Caco-2 (cell line): ENCODE measurements at regions of chr11 and their contacts with region 1.

Region 1: GRCh38 chr11:129117595-129118350 is 74.4 kb downstream of the ARHGAP32 start:
- DNase-seq: peak; percentile 70 to 83
- H3K4me3 ChIP-seq: no peak overlapping the region
- H3K4me3 Mint-ChIP-seq: no peak overlapping the region
- H3K27ac Mint-ChIP-seq: no peak overlapping the region
- H3K4me1 ChIP-seq: peaks cover 33% of the 10 kb centered on the region
- H3K4me1 Mint-ChIP-seq: peaks cover 22% of the 10 kb centered on the region
- H3K27me3 ChIP-seq: no peaks in the 10 kb centered on the region
- H3K27me3 Mint-ChIP-seq: no peaks in the 10 kb centered on the region
- CTCF ChIP-seq: peak; percentile 97 to 98

Region 2: DNA sequence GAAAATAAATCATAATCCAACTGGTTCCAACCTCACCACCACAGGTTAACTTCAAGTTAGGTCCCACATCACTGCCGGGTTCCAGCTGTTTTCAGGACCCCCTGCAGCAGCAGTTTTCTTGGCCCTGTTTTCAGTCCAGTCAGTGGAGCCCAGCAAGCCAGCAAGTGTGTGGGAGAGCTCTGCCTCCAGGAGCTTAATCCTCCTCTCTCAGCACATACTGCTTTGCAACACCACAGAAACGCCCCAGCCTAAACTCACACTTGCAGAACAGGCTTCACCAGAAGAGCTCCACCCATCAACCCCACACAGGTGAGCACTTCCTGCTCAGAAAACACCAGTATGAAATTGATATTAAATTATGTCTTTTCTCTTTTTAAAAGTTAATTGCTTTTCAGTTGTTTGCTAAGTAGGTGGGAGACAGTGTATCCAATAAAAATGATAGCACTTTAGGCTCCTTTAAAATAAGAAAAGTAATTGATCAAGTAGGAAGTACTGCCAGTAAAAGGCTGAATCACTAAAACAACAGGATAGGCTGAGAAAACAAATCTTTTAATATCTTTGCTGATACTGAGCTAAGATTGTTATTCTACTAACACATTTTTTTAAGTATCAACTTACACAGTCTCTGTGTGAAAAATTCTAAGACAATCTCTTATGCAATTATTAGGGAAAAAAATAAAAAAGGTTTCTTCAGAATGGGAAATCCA is 93.7 kb before region 1 on chr11:
- CTCF ChIA-PET with region 1: no interaction called
- POLR2A ChIA-PET with region 1: no interaction called
- intact Hi-C with region 1: loop called (anchors 1 kb)
- DNase-seq: peak; percentile 85 to 89
- H3K4me3 ChIP-seq: no peak overlapping the region
- H3K4me3 Mint-ChIP-seq: peak overlapping the region; percentile 55
- H3K27ac Mint-ChIP-seq: peak overlapping the region; percentile 65
- H3K4me1 ChIP-seq: peaks cover 14% of the 10 kb centered on the region
- H3K4me1 Mint-ChIP-seq: peaks cover 11% of the 10 kb centered on the region
- H3K27me3 ChIP-seq: no peaks in the 10 kb centered on the region
- H3K27me3 Mint-ChIP-seq: no peaks in the 10 kb centered on the region
- CTCF ChIP-seq: no peak

Region 3: DNA sequence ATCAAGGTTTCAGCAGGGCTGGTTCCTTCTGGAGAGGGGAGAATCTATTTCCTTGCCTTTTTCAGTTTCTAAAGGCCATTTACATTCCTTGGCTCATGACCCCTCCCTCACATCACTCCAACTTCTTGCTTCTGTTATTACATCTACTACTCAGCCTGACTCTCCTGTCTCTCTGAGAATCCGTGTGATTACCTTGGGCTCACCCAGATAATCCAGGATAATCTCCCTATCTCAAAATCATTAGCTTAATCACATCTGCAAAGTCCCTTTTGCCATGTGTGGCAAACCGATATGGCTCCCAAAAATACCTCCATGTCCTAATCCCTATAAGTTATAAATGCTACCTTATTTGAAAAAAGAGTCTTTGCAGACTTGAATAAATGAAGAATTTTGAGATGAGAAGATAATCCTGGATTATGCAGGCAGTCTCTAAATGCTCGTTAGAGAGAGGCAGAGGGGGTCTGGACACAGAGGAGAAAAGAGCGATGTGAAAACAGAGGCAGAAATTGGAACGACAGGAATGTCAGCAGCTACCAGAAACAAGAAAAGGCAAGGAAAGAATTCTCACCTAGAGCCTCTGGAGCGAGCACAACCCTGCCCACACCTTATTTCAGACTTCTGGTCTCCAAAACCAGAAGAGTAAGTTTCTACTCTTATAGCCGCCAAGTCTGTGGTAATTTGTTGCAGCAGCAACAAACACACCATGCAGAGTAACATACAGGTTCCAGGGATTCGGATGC is 97.9 kb after region 1 on chr11:
- CTCF ChIA-PET with region 1: no interaction called
- POLR2A ChIA-PET with region 1: no interaction called
- intact Hi-C with region 1: loop called (anchors 5 kb)
- DNase-seq: peak in 1 of 2 experiments; percentile 55
- H3K4me3 ChIP-seq: no peak overlapping the region
- H3K4me3 Mint-ChIP-seq: peak overlapping the region; percentile 15
- H3K27ac Mint-ChIP-seq: peak overlapping the region; percentile 43
- H3K4me1 ChIP-seq: peaks cover 13% of the 10 kb centered on the region
- H3K4me1 Mint-ChIP-seq: peaks cover 29% of the 10 kb centered on the region
- H3K27me3 ChIP-seq: no peaks in the 10 kb centered on the region
- H3K27me3 Mint-ChIP-seq: no peaks in the 10 kb centered on the region
- CTCF ChIP-seq: no peak

Region 4: DNA sequence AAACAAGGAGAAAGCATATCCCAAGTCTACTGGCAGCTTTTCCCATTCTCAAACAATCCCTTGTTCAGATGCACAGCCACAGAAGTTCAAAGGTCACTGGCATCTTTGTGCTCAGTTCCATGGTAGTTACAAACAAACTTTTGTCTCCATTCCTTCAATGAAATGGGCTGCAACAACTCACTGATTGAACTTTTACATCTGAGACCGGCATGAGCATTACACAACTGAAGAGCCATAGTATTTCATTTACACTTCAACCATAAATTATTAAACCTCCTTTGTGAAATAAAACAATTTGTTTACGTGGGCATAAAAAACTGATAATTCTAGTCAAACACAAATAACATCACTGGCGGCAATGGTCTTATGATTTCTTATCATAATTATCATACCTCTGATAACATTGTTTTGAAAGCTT is 142.2 kb after region 1 on chr11:
- CTCF ChIA-PET with region 1: no interaction called
- POLR2A ChIA-PET with region 1: no interaction called
- intact Hi-C with region 1: loop called (anchors 1 kb)
- DNase-seq: peak; percentile 53 to 58
- H3K4me3 ChIP-seq: no peak overlapping the region
- H3K4me3 Mint-ChIP-seq: peak overlapping the region; percentile 54
- H3K27ac Mint-ChIP-seq: peak overlapping the region; percentile 61
- H3K4me1 ChIP-seq: peaks cover 36% of the 10 kb centered on the region
- H3K4me1 Mint-ChIP-seq: peaks cover 60% of the 10 kb centered on the region
- H3K27me3 ChIP-seq: no peaks in the 10 kb centered on the region
- H3K27me3 Mint-ChIP-seq: no peaks in the 10 kb centered on the region
- CTCF ChIP-seq: no peak

Region 5: GRCh38 chr11:129315781-129316481 is 198.2 kb after region 1 on chr11:
- CTCF ChIA-PET with region 1: interaction called, 4 read pairs
- POLR2A ChIA-PET with region 1: interaction called, 3 read pairs
- intact Hi-C with region 1: loop called (anchors 1 kb)
- DNase-seq: peak; percentile 99 to 100
- H3K4me3 ChIP-seq: no peak overlapping the region
- H3K4me3 Mint-ChIP-seq: peak overlapping the region; percentile 66
- H3K27ac Mint-ChIP-seq: peak overlapping the region; percentile 94
- H3K4me1 ChIP-seq: peaks cover 69% of the 10 kb centered on the region
- H3K4me1 Mint-ChIP-seq: peaks cover 80% of the 10 kb centered on the region
- H3K27me3 ChIP-seq: no peaks in the 10 kb centered on the region
- H3K27me3 Mint-ChIP-seq: no peaks in the 10 kb centered on the region
- CTCF ChIP-seq: peak in 1 of 2 experiments; percentile 83

Region 6: DNA sequence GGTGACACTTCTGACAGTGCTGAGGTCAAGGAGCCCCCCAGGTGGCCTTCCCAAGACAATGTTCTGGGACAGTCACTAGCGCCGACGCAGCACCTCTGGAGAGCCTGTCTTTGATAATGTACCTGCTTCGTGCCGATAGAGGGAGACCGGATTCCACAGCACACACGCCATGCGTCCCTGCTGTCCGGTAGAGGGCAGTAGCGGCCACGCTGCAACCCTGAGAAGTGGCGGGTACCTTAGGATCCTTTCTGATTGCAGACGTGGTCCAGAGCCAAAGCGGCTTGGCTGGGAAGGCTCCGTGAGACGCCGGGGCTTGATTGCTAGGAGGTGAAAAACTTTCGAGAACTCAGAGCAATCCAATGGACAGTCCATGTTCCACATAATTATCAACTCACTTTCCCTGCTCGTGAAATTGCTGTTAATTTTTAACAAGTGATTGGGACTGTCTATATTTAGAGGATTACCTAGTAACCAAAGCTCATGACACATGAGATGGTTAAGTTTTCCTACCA is 246.4 kb after region 1 on chr11:
- CTCF ChIA-PET with region 1: interaction called, 5 read pairs
- POLR2A ChIA-PET with region 1: no interaction called
- intact Hi-C with region 1: loop called (anchors 1 kb)
- DNase-seq: peak; percentile 95 to 96
- H3K4me3 ChIP-seq: 0 out of 2 replicates have a peak overlapping the region, but pooled peaks have one; percentile 19
- H3K4me3 Mint-ChIP-seq: no peak overlapping the region
- H3K27ac Mint-ChIP-seq: no peak overlapping the region
- H3K4me1 ChIP-seq: peaks cover 10% of the 10 kb centered on the region; the same call in 1 of the 2 replicates
- H3K4me1 Mint-ChIP-seq: no peaks in the 10 kb centered on the region
- H3K27me3 ChIP-seq: no peaks in the 10 kb centered on the region
- H3K27me3 Mint-ChIP-seq: peaks cover 28% of the 10 kb centered on the region
- CTCF ChIP-seq: peak; percentile 100

Region 7: DNA sequence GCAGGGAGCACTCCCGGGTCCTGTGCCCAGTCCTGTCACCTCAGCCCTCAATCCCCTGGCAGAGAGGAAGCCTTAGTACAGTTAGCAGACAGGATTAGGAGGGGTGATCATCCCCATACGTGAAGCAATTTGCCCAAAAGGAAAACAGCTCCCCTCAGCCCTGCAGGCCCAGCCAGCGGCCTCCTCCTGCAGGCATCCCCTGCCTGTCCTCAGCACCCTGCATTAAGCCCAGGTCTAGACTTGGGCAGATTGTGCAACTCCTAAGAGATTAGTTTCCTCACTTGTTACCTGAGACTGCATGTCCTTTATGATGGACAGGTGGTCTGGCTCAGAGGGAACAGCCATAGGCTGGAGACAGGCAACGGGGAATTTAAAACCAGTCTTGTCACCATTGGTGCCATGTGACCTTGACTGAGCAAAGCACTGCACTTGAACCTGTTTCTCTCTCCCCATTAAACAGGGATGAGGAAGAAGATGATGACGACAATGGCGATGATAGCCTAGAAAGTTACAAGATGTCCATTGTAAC is 602.4 kb after region 1 on chr11:
- CTCF ChIA-PET with region 1: no interaction called
- POLR2A ChIA-PET with region 1: no interaction called
- intact Hi-C with region 1: no loop called
- DNase-seq: peak in 1 of 2 experiments; percentile 25
- H3K4me3 ChIP-seq: no peak overlapping the region
- H3K4me3 Mint-ChIP-seq: no peak overlapping the region
- H3K27ac Mint-ChIP-seq: no peak overlapping the region
- H3K4me1 ChIP-seq: no peaks in the 10 kb centered on the region
- H3K4me1 Mint-ChIP-seq: no peaks in the 10 kb centered on the region
- H3K27me3 ChIP-seq: no peaks in the 10 kb centered on the region
- H3K27me3 Mint-ChIP-seq: no peaks in the 10 kb centered on the region
- CTCF ChIP-seq: no peak